ENCODE measurements at regions of chr13 and their contacts with region 1.

Region 1: GRCh38 chr13:46603165-46603603 is 50.2 kb downstream of the LRCH1 start:
- DNase-seq: no peak
- ATAC-seq: peak in 6 of 8 donors; percentile 15 to 53 (median 40)
- H3K4me3 ChIP-seq: no peak overlapping the region
- H3K27ac ChIP-seq: peak overlapping the region in 7 of 10 donors; percentile 7 to 71 (median 53)
- H3K4me1 ChIP-seq: peaks cover 9 to 96% (median 85%) of the 10 kb centered on the region in 9 donors
- H3K27me3 ChIP-seq: no peaks in the 10 kb centered on the region
- CTCF ChIP-seq: peak; percentile 5 to 54 (median 32)

Region 2: DNA sequence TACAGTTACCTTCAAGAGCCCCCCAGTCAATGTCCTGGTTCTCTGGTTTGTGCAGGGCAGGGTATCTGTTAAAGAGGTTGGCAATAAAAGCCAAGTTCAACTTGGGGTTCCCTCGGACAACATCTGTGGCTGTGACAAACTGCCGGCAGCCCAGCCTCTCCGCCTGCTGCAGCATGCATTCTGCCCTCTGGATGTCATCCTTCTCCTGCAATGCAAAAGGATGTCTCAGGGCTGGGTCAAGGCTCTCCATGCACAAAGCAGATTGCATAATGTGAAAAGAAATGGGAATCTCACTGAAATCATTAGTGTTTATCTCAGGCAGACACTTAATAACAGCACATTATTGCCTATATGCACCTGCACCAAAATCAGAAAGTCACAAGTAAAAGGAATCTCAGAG is 456.3 kb before region 1 on chr13:
- intact Hi-C with region 1: no loop called
- DNase-seq: no peak
- ATAC-seq: no peak
- H3K4me3 ChIP-seq: no peak overlapping the region
- H3K27ac ChIP-seq: no peak overlapping the region
- H3K4me1 ChIP-seq: no peaks in the 10 kb centered on the region
- H3K27me3 ChIP-seq: peaks cover 0 to 13% (median 0%) of the 10 kb centered on the region in 7 donors
- CTCF ChIP-seq: peak in 4 of 9 donors; percentile 18 to 23 (median 22)

Region 3: DNA sequence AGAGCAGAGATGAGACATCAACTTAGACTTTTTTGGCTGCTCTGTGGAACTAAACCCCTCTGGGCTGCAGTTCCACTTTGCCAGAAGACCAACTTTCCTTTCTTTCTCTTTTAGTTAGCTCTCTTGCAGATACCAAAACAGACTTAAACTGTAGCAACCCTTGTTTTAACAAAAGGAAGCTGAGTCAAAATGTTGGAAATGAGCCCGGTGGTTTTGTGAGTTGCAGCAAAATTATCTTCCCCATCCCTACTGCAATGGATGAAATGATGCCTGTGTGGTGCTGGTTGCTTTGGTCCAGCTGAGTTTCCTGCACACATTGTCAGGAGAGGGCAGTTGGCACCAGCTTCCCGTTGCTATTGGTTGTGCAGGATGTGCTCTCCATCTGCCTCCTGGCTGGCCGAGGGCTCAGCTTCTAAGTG is 65.1 kb after region 1 on chr13:
- intact Hi-C with region 1: loop called in 2 of 10 experiments (anchors 5 to 10 kb)
- DNase-seq: peak; percentile 36 to 65
- ATAC-seq: peak in 6 of 8 donors; percentile 40 to 68 (median 46)
- H3K4me3 ChIP-seq: peak overlapping the region in 7 of 10 donors; percentile 9 to 39 (median 16)
- H3K27ac ChIP-seq: peak overlapping the region in 9 of 10 donors; percentile 9 to 79 (median 58)
- H3K4me1 ChIP-seq: peaks cover 11 to 78% (median 56%) of the 10 kb centered on the region in 9 donors
- H3K27me3 ChIP-seq: no peaks in the 10 kb centered on the region
- CTCF ChIP-seq: no peak

Region 4: GRCh38 chr13:46679369-46680120 is 76.4 kb after region 1 on chr13:
- intact Hi-C with region 1: loop called in 2 of 10 experiments (anchors 5 kb)
- DNase-seq: peak in 1 of 2 donors; percentile 60
- ATAC-seq: peak; percentile 71 to 89 (median 84)
- H3K4me3 ChIP-seq: peak overlapping the region in 7 of 10 donors; percentile 16 to 46 (median 43)
- H3K27ac ChIP-seq: peak overlapping the region in 9 of 10 donors; percentile 0 to 80 (median 70)
- H3K4me1 ChIP-seq: peaks cover 0 to 76% (median 57%) of the 10 kb centered on the region in 9 donors
- H3K27me3 ChIP-seq: no peaks in the 10 kb centered on the region
- CTCF ChIP-seq: peak in 5 of 9 donors; percentile 20 to 55 (median 29)

Region 5: GRCh38 chr13:47087841-47088240 is 484.7 kb after region 1 on chr13:
- intact Hi-C with region 1: no loop called
- DNase-seq: no peak
- ATAC-seq: peak in 1 of 8 donors; percentile 14
- H3K4me3 ChIP-seq: no peak overlapping the region
- H3K27ac ChIP-seq: no peak overlapping the region
- H3K4me1 ChIP-seq: peaks cover 0 to 8% (median 0%) of the 10 kb centered on the region in 9 donors
- H3K27me3 ChIP-seq: no peaks in the 10 kb centered on the region
- CTCF ChIP-seq: no peak

Measured in heart right ventricle (tissue), 16 donors.